Posterior vena cava (tissue), 2 donors: ENCODE measurements at regions of chr18 and their contacts with region 1.

Region 1: DNA sequence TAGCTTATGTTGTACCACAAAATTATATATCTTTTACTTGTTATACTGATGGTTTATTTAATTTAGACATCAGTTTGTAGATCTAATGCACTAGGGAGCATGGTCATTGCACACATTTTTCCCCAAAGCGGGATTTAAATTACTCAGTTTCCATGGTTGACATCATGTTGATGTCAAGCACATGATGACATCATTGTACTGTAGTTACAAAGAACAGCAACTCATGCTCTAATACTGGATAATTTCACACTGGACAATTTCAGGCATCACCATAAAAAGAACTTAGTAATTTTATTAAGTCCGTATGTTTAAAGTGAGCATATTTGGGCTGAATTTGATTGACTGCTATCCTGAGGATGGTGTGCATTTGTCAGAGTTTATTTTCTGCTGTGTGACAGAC is 804.8 kb downstream of the METTL4 start:
- DNase-seq: no peak

Region 2: GRCh38 chr18:1308686-1309085 is 457.8 kb before region 1 on chr18:
- intact Hi-C with region 1: loop called in 1 of 2 experiments (anchors 5 kb)
- DNase-seq: no peak